ENCODE measurements at regions of chr19 and their contacts with region 1.

Region 1: GRCh38 chr19:46404055-46404752 is 9.2 kb downstream of the CCDC8 start:
- DNase-seq: no peak
- H3K4me3 Mint-ChIP-seq: peak overlapping the region; percentile 39
- H3K27ac Mint-ChIP-seq: peak overlapping the region; percentile 4
- H3K4me1 Mint-ChIP-seq: peaks cover 6% of the 10 kb centered on the region
- H3K27me3 Mint-ChIP-seq: peaks cover 68% of the 10 kb centered on the region

Region 2: DNA sequence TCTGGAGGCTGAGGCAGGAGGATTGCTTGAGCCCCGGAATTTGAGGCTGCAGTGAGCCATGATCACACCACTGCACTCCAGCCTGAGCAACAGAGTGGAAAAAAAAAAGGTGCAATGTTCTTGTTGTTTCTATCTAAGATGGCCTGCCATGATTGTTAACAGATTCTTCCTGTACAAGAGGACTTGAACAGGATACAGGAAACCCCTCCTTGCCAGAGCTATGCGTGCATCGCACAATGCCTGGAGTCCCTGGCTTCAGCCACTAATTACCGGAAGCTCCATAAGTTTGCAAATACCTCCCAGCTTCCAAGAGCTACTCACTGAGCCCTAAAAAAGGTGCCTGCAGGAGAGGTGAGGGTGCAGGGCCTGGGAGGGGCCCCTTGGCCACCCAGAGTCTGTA is 120.4 kb before region 1 on chr19:
- intact Hi-C with region 1: loop called (anchors 5 kb)
- DNase-seq: no peak
- H3K4me3 Mint-ChIP-seq: no peak overlapping the region
- H3K27ac Mint-ChIP-seq: no peak overlapping the region
- H3K4me1 Mint-ChIP-seq: no peaks in the 10 kb centered on the region
- H3K27me3 Mint-ChIP-seq: peaks cover 6% of the 10 kb centered on the region

Region 3: GRCh38 chr19:46426506-46427162 is 22.4 kb after region 1 on chr19:
- intact Hi-C with region 1: loop called (anchors 2 kb)
- DNase-seq: peak; percentile 3
- H3K4me3 Mint-ChIP-seq: peak overlapping the region; percentile 9
- H3K27ac Mint-ChIP-seq: peak overlapping the region; percentile 3
- H3K4me1 Mint-ChIP-seq: peaks cover 38% of the 10 kb centered on the region
- H3K27me3 Mint-ChIP-seq: peaks cover 70% of the 10 kb centered on the region

Region 4: GRCh38 chr19:46487802-46488445 is 83.7 kb after region 1 on chr19:
- intact Hi-C with region 1: loop called (anchors 1 kb)
- DNase-seq: peak; percentile 61
- H3K4me3 Mint-ChIP-seq: no peak overlapping the region
- H3K27ac Mint-ChIP-seq: peak overlapping the region; percentile 67
- H3K4me1 Mint-ChIP-seq: no peaks in the 10 kb centered on the region
- H3K27me3 Mint-ChIP-seq: peaks cover 69% of the 10 kb centered on the region

Region 5: DNA sequence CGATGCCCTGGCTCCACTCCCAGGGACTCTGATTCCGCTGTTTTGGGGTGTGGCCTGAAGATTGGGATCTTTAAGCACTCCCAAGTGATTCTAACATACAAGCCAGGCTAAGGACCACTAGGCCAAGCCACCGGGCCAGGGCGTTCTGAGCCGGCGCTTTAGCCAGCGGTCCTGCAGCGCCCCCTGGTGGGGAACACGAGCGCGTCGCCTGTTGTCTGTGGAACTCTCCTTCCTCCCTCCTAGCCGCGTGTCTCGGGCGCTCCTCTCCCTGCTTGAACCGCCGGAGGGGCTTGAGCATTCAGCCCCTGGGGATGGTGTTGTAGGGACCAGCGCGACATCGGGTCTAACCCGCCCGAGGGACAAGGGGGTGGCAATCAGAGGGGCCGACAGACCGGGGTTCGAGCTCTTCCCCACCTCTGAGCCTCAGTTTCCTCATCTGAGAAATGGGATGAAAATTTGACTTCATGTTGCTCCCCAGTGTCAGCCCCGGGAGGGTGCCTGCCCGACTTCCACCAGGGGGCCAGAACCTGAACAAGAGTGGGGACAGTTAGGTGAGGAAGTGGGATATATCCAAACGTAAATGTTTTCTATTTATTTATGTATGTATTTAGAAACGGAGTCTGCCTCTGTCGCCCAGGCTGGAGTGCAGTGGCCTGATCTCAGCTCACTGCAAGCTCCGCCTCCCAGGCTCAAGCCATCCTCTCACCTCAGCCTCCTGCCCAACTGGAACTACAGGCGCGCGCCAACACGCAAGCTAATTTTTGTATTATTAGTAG is 109.4 kb after region 1 on chr19:
- intact Hi-C with region 1: loop called (anchors 1 kb)
- DNase-seq: peak; percentile 66
- H3K4me3 Mint-ChIP-seq: no peak overlapping the region
- H3K27ac Mint-ChIP-seq: no peak overlapping the region
- H3K4me1 Mint-ChIP-seq: peaks cover 12% of the 10 kb centered on the region
- H3K27me3 Mint-ChIP-seq: peaks cover 27% of the 10 kb centered on the region

Measured in activated T-helper 1 cell treated with anti-CD3 and anti-CD28 coated beads, Interleukin-12 subunit alpha, Interleukin-12 subunit beta, Interleukin-2, Interleukin-4 antibody, amounts not matched to agents 30 ng/mL and 10 ng/mL and 1 ng/mL, durations not matched to agents 14 hours and 24 hours and 36 hours (primary cell).